HEK293T (cell line): ENCODE measurements at regions of chr5 and their contacts with region 1.

Region 1: GRCh38 chr5:14727428-14727865 is 62.9 kb downstream of the OTULIN start:
- DNase-seq: peak; percentile 80

Region 2: GRCh38 chr5:15003511-15003920 is 276.1 kb after region 1 on chr5:
- CTCF ChIA-PET with region 1: interaction called, 21 read pairs
- POLR2A ChIA-PET with region 1: interaction called, 3 read pairs
- DNase-seq: peak; percentile 73